Calu3 (cell line): ENCODE measurements at regions of chr3 and their contacts with region 1.

Region 1: DNA sequence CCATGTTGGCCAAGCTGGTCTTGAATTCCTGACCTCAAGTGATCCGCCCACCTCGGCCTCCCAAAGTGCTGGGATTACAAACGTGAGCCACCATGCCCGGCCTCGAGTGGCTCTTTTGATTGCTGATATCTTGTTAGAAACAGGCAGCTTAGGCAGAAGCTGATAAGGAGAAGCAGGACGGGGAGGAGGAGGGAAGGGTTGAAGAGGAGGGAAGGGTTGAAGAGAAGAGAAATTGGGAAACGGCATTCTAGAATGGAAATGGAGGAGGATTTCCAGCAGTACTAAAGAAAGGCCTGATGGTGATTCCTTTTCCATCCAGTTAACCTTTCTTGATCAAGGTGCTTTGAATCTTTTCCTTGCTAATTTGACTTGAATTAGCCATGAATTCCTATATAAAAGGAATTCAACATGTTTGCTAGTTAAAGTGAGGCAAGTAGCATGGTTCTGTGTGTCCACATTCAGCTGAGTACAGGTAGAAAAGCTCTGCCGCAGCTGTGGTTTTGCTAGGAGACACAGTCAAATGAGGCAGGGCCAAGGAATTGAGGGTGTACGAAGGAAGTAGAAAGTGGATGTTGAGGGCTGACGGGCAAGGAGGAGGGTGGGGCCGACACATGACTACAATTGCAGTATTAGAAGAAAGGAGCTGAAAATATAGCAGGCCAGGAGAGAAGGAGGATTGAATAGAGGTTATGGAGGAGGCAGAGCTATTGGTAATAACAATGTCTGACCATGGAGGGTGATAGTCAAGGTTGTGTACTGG is 27.2 kb upstream of the ATP1B3 start:
- DNase-seq: no peak
- H3K4me3 Mint-ChIP-seq: no peak overlapping the region
- H3K27ac Mint-ChIP-seq: no peak overlapping the region
- H3K4me1 Mint-ChIP-seq: peaks cover 10% of the 10 kb centered on the region
- H3K27me3 Mint-ChIP-seq: no peaks in the 10 kb centered on the region
- CTCF ChIP-seq: no peak

Region 2: GRCh38 chr3:141469720-141470119 is 379.5 kb before region 1 on chr3:
- CTCF ChIA-PET with region 1: interaction called, 10 read pairs
- intact Hi-C with region 1: no loop called
- DNase-seq: no peak
- H3K4me3 Mint-ChIP-seq: no peak overlapping the region
- H3K27ac Mint-ChIP-seq: no peak overlapping the region
- H3K4me1 Mint-ChIP-seq: no peaks in the 10 kb centered on the region
- H3K27me3 Mint-ChIP-seq: no peaks in the 10 kb centered on the region
- CTCF ChIP-seq: no peak

Region 3: DNA sequence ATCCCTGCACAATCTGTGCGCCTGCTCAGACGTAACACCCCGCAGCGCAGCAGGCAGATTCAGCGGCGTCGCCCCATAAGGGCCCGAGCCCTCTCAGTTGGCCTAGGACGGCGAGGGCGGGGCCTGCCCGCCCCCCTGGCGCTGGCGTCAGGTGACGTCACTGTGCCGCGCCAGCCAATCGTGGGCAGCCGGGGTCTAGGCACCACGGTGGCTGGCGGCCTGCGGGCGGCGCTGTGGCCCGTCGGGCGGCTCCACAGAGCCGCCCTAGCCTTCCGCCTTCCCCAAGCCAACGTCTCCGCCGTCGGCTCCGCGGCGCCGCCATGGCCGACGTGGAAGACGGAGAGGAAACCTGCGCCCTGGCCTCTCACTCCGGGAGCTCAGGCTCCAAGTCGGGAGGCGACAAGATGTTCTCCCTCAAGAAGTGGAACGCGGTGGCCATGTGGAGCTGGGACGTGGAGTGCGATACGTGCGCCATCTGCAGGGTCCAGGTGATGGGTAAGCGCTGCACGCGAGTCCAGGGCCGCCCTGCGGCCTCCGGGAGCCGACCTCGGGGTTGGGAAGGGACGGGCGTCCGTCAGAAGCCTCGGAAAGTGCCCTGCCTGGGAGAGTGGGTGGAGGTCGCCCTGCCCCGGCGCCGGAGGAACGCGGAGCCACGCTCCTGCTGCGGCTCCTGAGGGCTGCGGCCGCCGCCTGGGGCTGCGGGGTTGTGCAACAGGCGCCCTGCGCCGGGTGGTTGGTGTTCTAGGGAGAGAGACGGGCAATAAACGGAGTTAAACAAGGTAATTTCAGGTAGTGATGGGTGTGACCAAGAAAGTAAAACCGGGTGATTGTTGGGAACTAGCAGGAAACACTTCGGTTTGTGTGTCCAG is 111.0 kb before region 1 on chr3 and contains the start of gene RNF7:
- CTCF ChIA-PET with region 1: no interaction called
- intact Hi-C with region 1: no loop called
- DNase-seq: peak; percentile 99
- H3K4me3 Mint-ChIP-seq: peak within 1 kb of the TSS; percentile 95
- H3K27ac Mint-ChIP-seq: peak within 1 kb of the TSS; percentile 93
- H3K4me1 Mint-ChIP-seq: peaks cover 29% of the 10 kb centered on the region
- H3K27me3 Mint-ChIP-seq: no peaks in the 10 kb centered on the region
- CTCF ChIP-seq: peak; percentile 94
- total RNA-seq, gene RNF7: 108 and 113 TPM in 2 replicates

Region 4: DNA sequence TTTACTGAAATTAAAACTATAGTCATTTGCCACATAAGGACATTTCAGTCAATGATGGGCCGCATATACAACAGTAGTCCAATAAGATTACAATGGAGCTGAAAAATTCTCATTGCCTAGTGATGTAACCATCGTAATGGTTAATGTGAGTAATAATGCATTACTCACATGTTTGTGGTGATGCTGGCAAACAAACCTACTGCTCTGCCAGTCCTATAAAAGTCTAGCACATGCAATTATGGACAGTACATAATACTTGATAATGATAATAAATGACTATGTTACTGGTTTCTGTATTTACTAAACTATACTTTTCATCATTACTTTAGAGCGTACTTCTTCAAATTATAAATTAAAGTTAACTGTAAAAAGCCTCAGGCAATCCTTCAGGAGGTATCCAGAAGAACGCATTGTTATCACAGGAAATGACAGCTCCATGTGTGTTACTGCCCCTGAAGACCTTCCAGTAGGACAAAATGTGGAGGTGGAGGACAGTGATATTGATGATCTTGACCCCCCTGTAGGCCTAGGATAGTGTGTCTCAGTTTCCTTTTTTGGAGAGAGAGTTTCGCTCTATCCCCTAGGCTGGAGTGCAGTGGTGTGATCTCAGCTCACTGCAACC is 129.9 kb after region 1 on chr3:
- CTCF ChIA-PET with region 1: no interaction called
- intact Hi-C with region 1: no loop called
- DNase-seq: no peak
- H3K4me3 Mint-ChIP-seq: no peak overlapping the region
- H3K27ac Mint-ChIP-seq: no peak overlapping the region
- H3K4me1 Mint-ChIP-seq: no peaks in the 10 kb centered on the region
- H3K27me3 Mint-ChIP-seq: no peaks in the 10 kb centered on the region
- CTCF ChIP-seq: no peak